Prostate gland (tissue), 2 donors: ENCODE measurements at regions of chr3 and their contacts with region 1.

Region 1: GRCh38 chr3:149009732-149010131 is 18.4 kb downstream of the GYG1 start:
- DNase-seq: no peak
- H3K4me3 ChIP-seq: no peak overlapping the region
- H3K27ac ChIP-seq: no peak overlapping the region
- H3K4me1 ChIP-seq: no peaks in the 10 kb centered on the region
- H3K27me3 ChIP-seq: no peaks in the 10 kb centered on the region
- CTCF ChIP-seq: no peak
- POLR2A ChIP-seq: no peak

Region 2: GRCh38 chr3:148643389-148643840 is 366.3 kb before region 1 on chr3:
- intact Hi-C with region 1: no loop called
- DNase-seq: no peak
- H3K4me3 ChIP-seq: no peak overlapping the region
- H3K27ac ChIP-seq: no peak overlapping the region
- H3K4me1 ChIP-seq: no peaks in the 10 kb centered on the region
- H3K27me3 ChIP-seq: no peaks in the 10 kb centered on the region
- CTCF ChIP-seq: no peak
- POLR2A ChIP-seq: no peak

Region 3: DNA sequence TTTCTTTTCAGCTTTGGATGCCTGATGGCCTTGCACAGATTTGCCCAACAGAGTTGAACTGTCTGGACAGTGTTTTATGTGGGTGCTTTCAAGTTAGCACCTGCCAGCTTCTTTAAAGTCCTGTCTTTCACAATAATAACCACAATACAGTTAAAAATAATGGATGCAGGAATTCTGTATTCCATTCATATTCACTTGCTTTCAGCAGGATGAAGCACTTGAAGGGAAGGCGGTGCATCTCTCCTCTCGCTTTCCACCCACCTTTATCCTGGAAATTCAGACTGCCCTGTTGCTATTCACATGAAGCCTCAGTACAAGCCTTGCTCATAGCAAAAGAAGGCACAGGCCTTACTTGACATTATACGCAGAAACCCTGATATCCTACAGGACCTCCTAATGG is 44.9 kb before region 1 on chr3:
- intact Hi-C with region 1: no loop called
- DNase-seq: no peak
- H3K4me3 ChIP-seq: no peak overlapping the region
- H3K27ac ChIP-seq: no peak overlapping the region
- H3K4me1 ChIP-seq: no peaks in the 10 kb centered on the region
- H3K27me3 ChIP-seq: no peaks in the 10 kb centered on the region
- CTCF ChIP-seq: no peak
- POLR2A ChIP-seq: no peak

Region 4: GRCh38 chr3:149086232-149086988 is 76.7 kb after region 1 on chr3 and contains the start of gene HLTF:
- intact Hi-C with region 1: loop called (anchors 10 kb)
- DNase-seq: peak; percentile 91
- H3K4me3 ChIP-seq: peak within 1 kb of the TSS; percentile 67 to 75
- H3K27ac ChIP-seq: peak within 1 kb of the TSS; percentile 73 to 77
- H3K4me1 ChIP-seq: no peaks in the 10 kb centered on the region
- H3K27me3 ChIP-seq: no peaks in the 10 kb centered on the region
- CTCF ChIP-seq: peak in 1 of 4 experiments; percentile 13
- POLR2A ChIP-seq: peak; percentile 48
- total RNA-seq, gene HLTF: 29.9 to 171 TPM